A549 (cell line): ENCODE measurements at regions of chr11 and their contacts with region 1.

Region 1: GRCh38 chr11:77127232-77127911 is 674 bp upstream of the MYO7A start:
- DNase-seq: peak; percentile 36 to 63
- ATAC-seq: peak; percentile 67 to 89
- H3K4me3 ChIP-seq: peak overlapping the region; percentile 37
- H3K27ac ChIP-seq: peak overlapping the region in 1 of 2 experiments; percentile 61; a peak in 3 of 6 replicates
- H3K4me1 ChIP-seq: no peaks in the 10 kb centered on the region
- CTCF ChIP-seq: peak; percentile 99
- EP300 ChIP-seq: no peak
- POLR2A ChIP-seq: no peak
- RAD21 ChIP-seq: peak; percentile 69 to 86

Region 2: GRCh38 chr11:77107950-77108349 is 19.4 kb before region 1 on chr11:
- CTCF ChIA-PET with region 1: interaction called, 41 read pairs
- POLR2A ChIA-PET with region 1: no interaction called
- DNase-seq: peak; percentile 43 to 73
- ATAC-seq: peak; percentile 46 to 76
- H3K4me3 ChIP-seq: no peak overlapping the region
- H3K27ac ChIP-seq: peak overlapping the region; percentile 69 to 83
- H3K4me1 ChIP-seq: peaks cover 58% of the 10 kb centered on the region
- CTCF ChIP-seq: no peak
- EP300 ChIP-seq: no peak
- POLR2A ChIP-seq: no peak
- RAD21 ChIP-seq: no peak

Region 3: DNA sequence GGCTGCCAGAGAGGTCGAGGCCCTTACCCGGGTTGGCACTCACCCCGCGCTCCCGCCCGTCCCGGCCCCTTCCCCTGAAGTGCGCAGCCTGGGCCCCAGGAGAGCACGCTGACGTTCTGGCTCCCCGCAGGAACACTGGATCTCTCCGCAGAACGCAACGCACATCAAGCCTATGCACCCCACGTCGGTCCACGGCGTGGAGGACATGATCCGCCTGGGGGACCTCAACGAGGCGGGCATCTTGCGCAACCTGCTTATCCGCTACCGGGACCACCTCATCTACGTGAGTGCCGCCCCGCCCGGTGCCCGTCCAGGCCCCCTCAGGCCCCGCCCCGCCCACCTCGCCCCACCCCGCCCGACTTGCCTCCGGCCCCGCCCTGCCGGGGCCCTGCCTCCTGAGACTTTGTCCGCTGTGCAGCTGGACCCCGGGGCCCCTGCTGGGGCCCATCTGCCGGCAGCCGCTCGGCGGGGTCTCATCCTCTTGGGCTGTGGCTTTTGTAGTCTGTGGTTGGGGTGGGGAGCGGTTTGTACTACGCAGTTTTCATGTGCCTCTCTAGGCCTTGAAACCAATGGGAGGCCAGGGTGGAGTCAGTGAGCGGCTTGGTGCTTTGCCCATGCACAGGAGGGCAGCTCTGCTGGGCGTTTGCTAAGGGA is 20.4 kb after region 1 on chr11:
- CTCF ChIA-PET with region 1: interaction called, 39 read pairs
- POLR2A ChIA-PET with region 1: no interaction called
- DNase-seq: no peak
- ATAC-seq: no peak
- H3K4me3 ChIP-seq: no peak overlapping the region
- H3K27ac ChIP-seq: no peak overlapping the region
- H3K4me1 ChIP-seq: peaks cover 3% of the 10 kb centered on the region; the same call in 1 of the 3 replicates
- CTCF ChIP-seq: no peak
- EP300 ChIP-seq: no peak
- POLR2A ChIP-seq: no peak
- RAD21 ChIP-seq: no peak

Region 4: GRCh38 chr11:77175869-77176539 is 48.6 kb after region 1 on chr11:
- CTCF ChIA-PET with region 1: interaction called, 22 read pairs
- POLR2A ChIA-PET with region 1: no interaction called
- DNase-seq: no peak
- ATAC-seq: no peak
- H3K4me3 ChIP-seq: no peak overlapping the region
- H3K27ac ChIP-seq: no peak overlapping the region
- H3K4me1 ChIP-seq: no peaks in the 10 kb centered on the region
- CTCF ChIP-seq: no peak
- EP300 ChIP-seq: no peak
- POLR2A ChIP-seq: no peak
- RAD21 ChIP-seq: no peak

Region 5: GRCh38 chr11:77547863-77548551 is 420.6 kb after region 1 on chr11:
- CTCF ChIA-PET with region 1: interaction called, 46 read pairs
- POLR2A ChIA-PET with region 1: no interaction called
- DNase-seq: peak; percentile 57 to 74
- ATAC-seq: peak; percentile 86 to 89
- H3K4me3 ChIP-seq: no peak overlapping the region
- H3K27ac ChIP-seq: no peak overlapping the region
- H3K4me1 ChIP-seq: no peaks in the 10 kb centered on the region
- CTCF ChIP-seq: peak; percentile 88
- EP300 ChIP-seq: no peak
- POLR2A ChIP-seq: no peak
- RAD21 ChIP-seq: peak; percentile 88 to 89